ENCODE measurements at regions of chr2 and their contacts with region 1.

Region 1: DNA sequence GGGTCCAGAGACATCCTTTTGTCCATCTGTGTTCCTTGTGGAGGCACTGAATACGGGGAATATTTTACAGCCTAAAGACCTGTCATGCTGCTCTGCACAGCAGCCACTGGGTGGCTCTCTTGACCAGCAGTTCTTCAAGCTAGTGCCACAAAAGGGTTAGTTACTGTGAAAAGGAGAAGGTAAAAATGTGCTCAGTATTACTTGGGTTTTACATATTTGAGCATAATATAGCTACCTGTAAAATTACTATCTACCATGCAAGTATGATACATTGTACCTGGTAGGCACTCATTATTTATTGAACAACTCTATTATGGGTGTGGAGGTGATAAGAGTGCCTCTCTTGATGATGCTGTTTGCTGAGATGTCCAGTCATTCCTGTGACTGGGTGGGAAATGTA is 23.6 kb downstream of the FZD5 start:
- DNase-seq: peak; percentile 44
- ATAC-seq: peak; percentile 81
- H3K4me3 Mint-ChIP-seq: no peak overlapping the region
- H3K27ac Mint-ChIP-seq: no peak overlapping the region
- H3K4me1 Mint-ChIP-seq: no peaks in the 10 kb centered on the region
- H3K27me3 Mint-ChIP-seq: no peaks in the 10 kb centered on the region
- CTCF ChIP-seq: peak; percentile 85

Region 2: GRCh38 chr2:207692206-207693065 is 53.7 kb before region 1 on chr2:
- CTCF ChIA-PET with region 1: no interaction called
- POLR2A ChIA-PET with region 1: no interaction called
- intact Hi-C with region 1: no loop called
- DNase-seq: peak; percentile 58
- ATAC-seq: peak; percentile 42
- H3K4me3 Mint-ChIP-seq: no peak overlapping the region
- H3K27ac Mint-ChIP-seq: no peak overlapping the region
- H3K4me1 Mint-ChIP-seq: peaks cover 9% of the 10 kb centered on the region
- H3K27me3 Mint-ChIP-seq: no peaks in the 10 kb centered on the region
- CTCF ChIP-seq: peak; percentile 65

Region 3: GRCh38 chr2:207725873-207726578 is 20.1 kb before region 1 on chr2:
- CTCF ChIA-PET with region 1: interaction called, 12 read pairs
- POLR2A ChIA-PET with region 1: no interaction called
- intact Hi-C with region 1: no loop called
- DNase-seq: no peak
- ATAC-seq: no peak
- H3K4me3 Mint-ChIP-seq: no peak overlapping the region
- H3K27ac Mint-ChIP-seq: no peak overlapping the region
- H3K4me1 Mint-ChIP-seq: peaks cover 43% of the 10 kb centered on the region
- H3K27me3 Mint-ChIP-seq: no peaks in the 10 kb centered on the region
- CTCF ChIP-seq: no peak

Region 4: GRCh38 chr2:207734264-207734635 is 11.9 kb before region 1 on chr2:
- CTCF ChIA-PET with region 1: interaction called, 11 read pairs
- POLR2A ChIA-PET with region 1: interaction called, 3 read pairs
- intact Hi-C with region 1: no loop called
- DNase-seq: no peak
- ATAC-seq: no peak
- H3K4me3 Mint-ChIP-seq: no peak overlapping the region
- H3K27ac Mint-ChIP-seq: no peak overlapping the region
- H3K4me1 Mint-ChIP-seq: no peaks in the 10 kb centered on the region
- H3K27me3 Mint-ChIP-seq: no peaks in the 10 kb centered on the region
- CTCF ChIP-seq: no peak

Region 5: GRCh38 chr2:207974216-207974605 is 228.1 kb after region 1 on chr2:
- CTCF ChIA-PET with region 1: interaction called, 25 read pairs
- POLR2A ChIA-PET with region 1: no interaction called
- intact Hi-C with region 1: loop called (anchors 5 kb)
- DNase-seq: no peak
- ATAC-seq: no peak
- H3K4me3 Mint-ChIP-seq: no peak overlapping the region
- H3K27ac Mint-ChIP-seq: no peak overlapping the region
- H3K4me1 Mint-ChIP-seq: peaks cover 15% of the 10 kb centered on the region
- H3K27me3 Mint-ChIP-seq: no peaks in the 10 kb centered on the region
- CTCF ChIP-seq: no peak

Region 6: GRCh38 chr2:208072250-208072892 is 326.2 kb after region 1 on chr2:
- CTCF ChIA-PET with region 1: interaction called, 36 read pairs
- POLR2A ChIA-PET with region 1: no interaction called
- intact Hi-C with region 1: no loop called
- DNase-seq: peak; percentile 71
- ATAC-seq: peak; percentile 74
- H3K4me3 Mint-ChIP-seq: no peak overlapping the region
- H3K27ac Mint-ChIP-seq: no peak overlapping the region
- H3K4me1 Mint-ChIP-seq: no peaks in the 10 kb centered on the region
- H3K27me3 Mint-ChIP-seq: peaks cover 4% of the 10 kb centered on the region
- CTCF ChIP-seq: peak; percentile 81

Measured in activated CD8-positive, alpha-beta T cell treated with anti-CD3 and anti-CD28 coated beads for 36 hours (primary cell).